SK-N-SH (cell line): ENCODE measurements at regions of chr11 and their contacts with region 1.

Region 1: GRCh38 chr11:121655537-121656327 is 203.0 kb upstream of the SORL1-AS1 start:
- DNase-seq: peak; percentile 91
- H3K4me3 ChIP-seq: peak overlapping the region; percentile 48 to 71
- H3K27ac ChIP-seq: peak overlapping the region; percentile 100
- H3K4me1 ChIP-seq: peaks cover 18 to 36% of the 10 kb centered on the region in 2 experiments
- H3K27me3 ChIP-seq: no peaks in the 10 kb centered on the region
- CTCF ChIP-seq: peak; percentile 88
- EP300 ChIP-seq: peak; percentile 70 to 83; a peak in 2 of 4 replicates
- RAD21 ChIP-seq: peak; percentile 92

Region 2: GRCh38 chr11:121643535-121644512 is 11.9 kb before region 1 on chr11:
- CTCF ChIA-PET with region 1: interaction called, 25 read pairs
- POLR2A ChIA-PET with region 1: no interaction called
- DNase-seq: no peak
- H3K4me3 ChIP-seq: no peak overlapping the region
- H3K27ac ChIP-seq: no peak overlapping the region
- H3K4me1 ChIP-seq: no peaks in the 10 kb centered on the region; a peak in 1 of 4 replicates
- H3K27me3 ChIP-seq: no peaks in the 10 kb centered on the region
- CTCF ChIP-seq: no peak
- EP300 ChIP-seq: no peak
- RAD21 ChIP-seq: no peak

Region 3: GRCh38 chr11:121722431-121723245 is 66.9 kb after region 1 on chr11:
- CTCF ChIA-PET with region 1: interaction called, 12 read pairs
- POLR2A ChIA-PET with region 1: no interaction called
- DNase-seq: peak; percentile 82
- H3K4me3 ChIP-seq: peak overlapping the region in 1 of 2 experiments; percentile 28; a peak in 1 of 4 replicates
- H3K27ac ChIP-seq: peak overlapping the region in 1 of 2 experiments; percentile 89; a peak in 2 of 4 replicates
- H3K4me1 ChIP-seq: peaks cover 8 to 14% of the 10 kb centered on the region in 2 experiments; a peak in 2 of 4 replicates
- H3K27me3 ChIP-seq: no peaks in the 10 kb centered on the region
- CTCF ChIP-seq: no peak
- EP300 ChIP-seq: peak in 1 of 2 experiments; percentile 65; a peak in 2 of 4 replicates
- RAD21 ChIP-seq: peak; percentile 31; the same call in 1 of the 2 replicates

Region 4: DNA sequence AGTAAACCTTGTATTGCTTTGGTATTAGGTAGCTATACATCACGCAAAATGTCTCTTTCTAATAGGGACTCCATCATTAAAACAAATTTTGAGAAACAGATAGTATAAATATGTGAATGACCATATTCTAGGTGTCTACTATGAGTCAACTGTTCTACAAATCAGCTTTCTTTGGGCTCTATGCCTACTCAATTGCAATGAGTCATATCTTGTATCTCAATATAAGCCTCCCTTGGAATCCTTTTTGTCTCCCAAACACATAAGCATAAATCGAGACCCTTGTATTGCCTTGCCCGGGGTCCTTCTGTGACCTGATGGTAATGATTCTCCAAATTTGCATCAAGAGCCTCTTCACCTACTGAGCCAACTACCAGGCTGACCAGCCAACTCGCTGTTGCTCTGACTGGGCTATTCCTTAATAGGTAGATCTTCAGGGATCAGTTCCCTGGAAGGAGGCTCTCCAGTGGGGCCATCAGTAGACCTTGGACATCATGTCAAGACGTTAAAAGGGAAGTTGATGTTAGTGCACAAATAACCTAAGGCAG is 438.1 kb after region 1 on chr11:
- CTCF ChIA-PET with region 1: interaction called, 134 read pairs
- POLR2A ChIA-PET with region 1: interaction called, 4 read pairs
- DNase-seq: no peak
- H3K4me3 ChIP-seq: peak overlapping the region in 1 of 2 experiments; percentile 39; a peak in 2 of 4 replicates
- H3K27ac ChIP-seq: peak overlapping the region; percentile 94 to 98
- H3K4me1 ChIP-seq: peaks cover 3 to 59% of the 10 kb centered on the region in 2 experiments; a peak in 3 of 4 replicates
- H3K27me3 ChIP-seq: no peaks in the 10 kb centered on the region
- CTCF ChIP-seq: no peak
- EP300 ChIP-seq: no peak
- RAD21 ChIP-seq: no peak

Region 5: DNA sequence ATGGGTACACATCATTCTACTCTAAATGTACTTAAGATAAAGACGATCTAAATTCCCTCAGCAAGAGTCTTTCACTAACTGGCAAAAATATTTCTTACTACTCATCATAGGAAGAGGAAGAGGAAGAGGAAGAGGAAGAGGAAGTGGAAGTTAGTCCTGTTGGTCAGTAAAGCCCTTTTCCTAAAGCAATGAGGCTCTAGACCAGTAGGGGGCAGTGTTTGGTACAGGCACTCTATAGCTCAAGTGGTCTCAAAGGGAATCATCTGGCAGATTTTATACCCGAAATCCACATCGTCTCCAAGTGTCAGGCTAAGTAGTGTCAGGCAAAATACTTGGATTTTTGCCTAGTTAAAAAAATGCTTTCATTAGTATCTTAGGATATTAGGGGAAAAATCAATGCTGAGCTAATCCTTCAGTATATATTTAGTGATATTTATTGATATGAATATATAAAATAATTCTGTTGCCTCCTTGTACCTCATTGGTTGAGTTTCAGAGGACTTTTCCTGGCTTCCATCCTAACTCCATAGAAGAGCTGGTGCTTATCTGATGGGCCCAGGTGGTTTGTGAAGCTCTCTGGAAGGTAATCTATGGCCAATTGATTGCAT is 452.6 kb after region 1 on chr11:
- CTCF ChIA-PET with region 1: interaction called, 134 read pairs
- POLR2A ChIA-PET with region 1: no interaction called
- DNase-seq: no peak
- H3K4me3 ChIP-seq: no peak overlapping the region; a peak in 1 of 4 replicates
- H3K27ac ChIP-seq: peak overlapping the region in 1 of 2 experiments; percentile 94; a peak in 2 of 4 replicates
- H3K4me1 ChIP-seq: peaks cover 8 to 70% of the 10 kb centered on the region in 2 experiments
- H3K27me3 ChIP-seq: no peaks in the 10 kb centered on the region
- CTCF ChIP-seq: peak; percentile 85
- EP300 ChIP-seq: no peak
- RAD21 ChIP-seq: peak; percentile 50

Region 6: DNA sequence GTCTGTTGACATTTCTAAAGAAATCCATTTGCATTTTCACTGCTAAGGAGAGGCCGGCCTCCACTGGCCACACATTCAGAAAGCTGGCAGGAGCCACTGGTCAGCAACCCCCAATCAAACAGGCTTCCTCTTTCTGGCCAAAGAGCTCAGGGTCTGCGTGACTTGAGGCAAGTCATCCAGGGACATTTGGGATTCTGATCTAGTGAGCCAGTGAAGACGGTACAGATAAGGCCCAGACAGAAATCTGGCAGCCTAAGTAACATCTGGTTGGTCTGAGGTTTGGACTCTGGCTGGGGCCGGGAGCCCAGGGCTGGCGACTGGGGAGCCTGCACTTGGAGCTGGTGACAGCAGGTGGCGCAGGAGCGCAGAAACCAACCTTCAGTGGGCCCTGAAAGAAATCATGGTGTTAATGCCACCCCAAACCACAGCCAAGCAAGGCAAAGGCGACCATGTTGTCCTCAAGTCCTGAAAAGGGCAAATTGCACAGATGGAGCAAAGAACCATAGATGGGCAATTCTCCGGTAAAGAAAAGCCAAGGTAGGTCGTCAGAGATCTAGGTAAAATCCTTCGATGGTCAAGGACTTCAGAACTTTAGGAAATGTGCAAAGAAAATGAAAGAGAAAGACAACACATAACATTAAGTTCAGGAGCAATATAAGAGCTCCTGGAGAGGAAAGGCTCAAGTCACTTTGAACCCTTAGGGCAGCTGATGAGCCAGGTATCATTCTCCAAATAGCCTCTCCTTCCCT is 559.7 kb after region 1 on chr11:
- CTCF ChIA-PET with region 1: interaction called, 57 read pairs
- POLR2A ChIA-PET with region 1: interaction called, 3 read pairs
- DNase-seq: peak; percentile 88
- H3K4me3 ChIP-seq: no peak overlapping the region
- H3K27ac ChIP-seq: peak overlapping the region; percentile 53 to 94
- H3K4me1 ChIP-seq: peaks cover 3 to 11% of the 10 kb centered on the region in 2 experiments
- H3K27me3 ChIP-seq: no peaks in the 10 kb centered on the region
- CTCF ChIP-seq: peak; percentile 95
- EP300 ChIP-seq: peak; percentile 62 to 95; a peak in 3 of 4 replicates
- RAD21 ChIP-seq: peak; percentile 88

Region 7: DNA sequence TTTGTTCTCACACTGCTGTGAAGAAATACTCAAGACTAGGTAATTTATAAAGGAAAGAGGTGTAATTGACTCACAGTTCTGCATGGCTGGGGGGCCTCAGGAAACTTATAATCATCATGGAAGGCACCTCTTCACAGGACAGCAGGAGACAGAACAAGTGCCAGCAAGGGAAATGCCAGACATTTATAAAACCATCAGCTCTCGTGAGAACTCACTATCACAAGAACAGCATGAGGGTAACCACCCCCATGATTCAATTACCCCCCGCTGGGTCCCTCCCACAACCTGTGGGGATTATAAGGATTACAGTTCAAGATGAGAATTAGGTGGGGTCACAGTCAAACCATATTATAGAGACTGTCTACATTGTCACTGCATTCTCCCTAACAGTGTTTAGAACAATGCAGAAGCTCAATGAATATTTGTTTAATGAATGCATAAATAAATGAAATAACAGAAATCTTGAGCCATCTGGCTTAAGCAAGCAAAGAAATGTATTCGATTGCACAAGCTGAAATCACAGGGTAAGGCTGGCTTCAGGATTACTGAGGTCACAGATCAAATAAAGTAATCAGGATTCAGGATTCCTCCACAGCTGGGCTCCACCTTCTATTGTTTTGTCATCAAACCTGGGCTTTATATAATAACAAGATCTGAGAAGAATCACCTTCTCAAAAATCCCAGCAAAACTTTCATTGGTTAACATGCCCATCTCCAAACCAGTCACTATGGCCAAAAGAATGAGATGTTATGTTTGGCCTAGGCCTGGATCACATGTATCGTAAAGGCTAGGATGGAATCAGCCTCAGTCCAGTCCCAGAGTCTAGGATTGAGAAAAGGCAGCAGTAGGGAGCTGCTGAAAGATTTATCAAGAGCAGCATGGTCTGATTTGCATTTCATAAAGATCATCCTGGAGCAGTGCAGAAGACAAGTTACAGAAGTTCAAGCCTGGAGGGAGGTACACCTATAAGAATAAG is 862.0 kb after region 1 on chr11:
- CTCF ChIA-PET with region 1: interaction called, 11 read pairs
- POLR2A ChIA-PET with region 1: no interaction called
- DNase-seq: no peak
- H3K4me3 ChIP-seq: no peak overlapping the region
- H3K27ac ChIP-seq: peak overlapping the region in 1 of 2 experiments; percentile 93; a peak in 2 of 4 replicates
- H3K4me1 ChIP-seq: peaks cover 5 to 18% of the 10 kb centered on the region in 2 experiments; a peak in 3 of 4 replicates
- H3K27me3 ChIP-seq: peaks cover 8% of the 10 kb centered on the region; the same call in 1 of the 2 replicates
- CTCF ChIP-seq: no peak
- EP300 ChIP-seq: no peak
- RAD21 ChIP-seq: no peak